ENCODE measurements at regions of chr1 and their contacts with region 1.

Region 1: GRCh38 chr1:180881806-180882509 is 30.7 kb upstream of the KIAA1614 start:
- DNase-seq: peak; percentile 21
- ATAC-seq: peak; percentile 78
- H3K4me3 ChIP-seq: no peak overlapping the region
- H3K27ac ChIP-seq: no peak overlapping the region
- H3K4me1 ChIP-seq: peaks cover 0 to 4% of the 10 kb centered on the region in 2 experiments; a peak in 1 of 4 replicates
- H3K27me3 ChIP-seq: no peaks in the 10 kb centered on the region
- CTCF ChIP-seq: peak; percentile 21 to 68 (median 58); a peak in 4 of 6 replicates
- POLR2A ChIP-seq: no peak
- RAD21 ChIP-seq: peak; percentile 81

Region 2: GRCh38 chr1:180498594-180498993 is 383.4 kb before region 1 on chr1:
- CTCF ChIA-PET with region 1: no interaction called
- POLR2A ChIA-PET with region 1: no interaction called
- RAD21 ChIA-PET with region 1: no interaction called
- intact Hi-C with region 1: no loop called
- DNase-seq: no peak
- ATAC-seq: no peak
- H3K4me3 ChIP-seq: no peak overlapping the region
- H3K27ac ChIP-seq: no peak overlapping the region
- H3K4me1 ChIP-seq: peaks cover 4 to 15% of the 10 kb centered on the region in 2 experiments; a peak in 3 of 4 replicates
- H3K27me3 ChIP-seq: no peaks in the 10 kb centered on the region
- CTCF ChIP-seq: no peak
- POLR2A ChIP-seq: no peak
- RAD21 ChIP-seq: no peak

Region 3: GRCh38 chr1:180515864-180516388 is 366.0 kb before region 1 on chr1:
- CTCF ChIA-PET with region 1: interaction called, 13 read pairs
- POLR2A ChIA-PET with region 1: no interaction called
- RAD21 ChIA-PET with region 1: interaction called in 1 of 2 experiments, 3 read pairs
- intact Hi-C with region 1: no loop called
- DNase-seq: peak; percentile 73
- ATAC-seq: peak; percentile 99
- H3K4me3 ChIP-seq: no peak overlapping the region
- H3K27ac ChIP-seq: peak overlapping the region; percentile 11; the same call in 1 of the 2 replicates
- H3K4me1 ChIP-seq: peaks cover 4 to 8% of the 10 kb centered on the region in 2 experiments; a peak in 2 of 4 replicates
- H3K27me3 ChIP-seq: no peaks in the 10 kb centered on the region
- CTCF ChIP-seq: peak; percentile 64 to 83 (median 80)
- POLR2A ChIP-seq: no peak
- RAD21 ChIP-seq: peak; percentile 94

Region 4: GRCh38 chr1:180814859-180815587 is 66.9 kb before region 1 on chr1:
- CTCF ChIA-PET with region 1: no interaction called
- POLR2A ChIA-PET with region 1: no interaction called
- RAD21 ChIA-PET with region 1: no interaction called
- intact Hi-C with region 1: no loop called
- DNase-seq: no peak
- ATAC-seq: no peak
- H3K4me3 ChIP-seq: no peak overlapping the region
- H3K27ac ChIP-seq: no peak overlapping the region
- H3K4me1 ChIP-seq: no peaks in the 10 kb centered on the region
- H3K27me3 ChIP-seq: no peaks in the 10 kb centered on the region
- CTCF ChIP-seq: no peak
- POLR2A ChIP-seq: no peak
- RAD21 ChIP-seq: no peak

Region 5: GRCh38 chr1:180962178-180962577 is 80.2 kb after region 1 on chr1:
- CTCF ChIA-PET with region 1: no interaction called
- POLR2A ChIA-PET with region 1: no interaction called
- RAD21 ChIA-PET with region 1: no interaction called
- intact Hi-C with region 1: no loop called
- DNase-seq: no peak
- ATAC-seq: no peak
- H3K4me3 ChIP-seq: no peak overlapping the region
- H3K27ac ChIP-seq: no peak overlapping the region
- H3K4me1 ChIP-seq: no peaks in the 10 kb centered on the region
- H3K27me3 ChIP-seq: no peaks in the 10 kb centered on the region
- CTCF ChIP-seq: no peak
- POLR2A ChIP-seq: no peak
- RAD21 ChIP-seq: no peak

Region 6: DNA sequence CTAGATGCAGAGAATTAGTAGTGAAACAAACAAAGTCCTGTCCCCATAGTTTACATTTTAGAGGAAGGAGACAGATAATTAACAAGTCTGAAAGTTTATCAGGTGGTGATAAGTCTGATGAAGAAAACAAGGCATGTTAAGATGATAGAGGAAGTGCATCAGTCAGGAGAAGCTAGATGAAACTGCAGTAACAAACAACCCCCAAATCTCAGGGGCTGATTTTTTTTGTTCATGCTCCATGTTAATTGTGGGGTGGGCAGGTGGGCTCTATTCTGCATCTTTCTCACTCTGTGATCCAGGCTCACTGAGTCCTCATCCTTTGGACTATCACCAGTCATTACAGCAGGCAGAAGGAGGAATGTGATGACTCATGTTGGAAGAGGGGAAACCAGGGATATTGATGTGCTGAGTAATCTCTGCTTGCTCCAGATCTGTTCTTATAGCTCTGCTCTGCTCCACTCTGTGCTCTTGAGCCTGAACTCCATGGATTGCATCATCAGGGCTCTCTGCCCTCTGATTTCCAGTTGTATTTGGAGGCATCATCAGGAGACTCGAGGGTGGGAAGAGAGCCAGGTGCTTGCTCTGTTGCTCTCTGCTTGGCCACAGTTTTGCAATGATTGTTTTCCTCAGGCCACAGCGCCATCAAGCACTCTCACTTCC is 373.4 kb after region 1 on chr1:
- CTCF ChIA-PET with region 1: no interaction called
- POLR2A ChIA-PET with region 1: no interaction called
- RAD21 ChIA-PET with region 1: no interaction called
- intact Hi-C with region 1: no loop called
- DNase-seq: no peak
- ATAC-seq: peak; percentile 77
- H3K4me3 ChIP-seq: no peak overlapping the region
- H3K27ac ChIP-seq: no peak overlapping the region
- H3K4me1 ChIP-seq: peaks cover 12 to 23% of the 10 kb centered on the region in 2 experiments
- H3K27me3 ChIP-seq: no peaks in the 10 kb centered on the region; the same call in 1 of the 2 replicates
- CTCF ChIP-seq: no peak
- POLR2A ChIP-seq: no peak
- RAD21 ChIP-seq: no peak